ENCODE measurements at regions of chr11 and their contacts with region 1.

Region 1: GRCh38 chr11:43282607-43283440 is 29.0 kb upstream of the API5 start:
- DNase-seq: peak; percentile 55
- ATAC-seq: peak; percentile 42
- H3K4me3 Mint-ChIP-seq: no peak overlapping the region
- H3K27ac Mint-ChIP-seq: no peak overlapping the region
- H3K4me1 Mint-ChIP-seq: no peaks in the 10 kb centered on the region
- H3K27me3 Mint-ChIP-seq: peaks cover 6% of the 10 kb centered on the region

Region 2: DNA sequence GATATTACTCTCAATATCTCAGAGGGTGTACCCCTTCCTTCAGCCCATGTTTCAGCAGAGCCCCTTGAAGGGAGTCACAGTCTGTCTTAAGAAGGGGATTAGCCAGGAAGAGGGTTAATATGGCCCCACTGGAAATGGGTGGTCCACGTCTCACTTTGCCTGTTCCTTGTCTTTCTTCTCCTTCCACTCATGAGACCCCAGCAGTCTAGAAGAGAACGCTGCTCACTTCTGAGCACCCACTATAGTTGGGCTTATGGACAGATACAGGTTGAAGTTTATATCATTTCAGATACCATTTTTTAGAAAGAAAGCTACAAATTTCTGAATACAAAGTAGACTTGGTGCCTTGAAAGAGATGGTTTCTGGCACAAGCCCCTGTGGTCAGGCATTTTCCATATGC is 110.3 kb before region 1 on chr11:
- CTCF ChIA-PET with region 1: no interaction called
- DNase-seq: no peak
- ATAC-seq: no peak
- H3K4me3 Mint-ChIP-seq: no peak overlapping the region
- H3K27ac Mint-ChIP-seq: no peak overlapping the region
- H3K4me1 Mint-ChIP-seq: no peaks in the 10 kb centered on the region
- H3K27me3 Mint-ChIP-seq: no peaks in the 10 kb centered on the region

Region 3: DNA sequence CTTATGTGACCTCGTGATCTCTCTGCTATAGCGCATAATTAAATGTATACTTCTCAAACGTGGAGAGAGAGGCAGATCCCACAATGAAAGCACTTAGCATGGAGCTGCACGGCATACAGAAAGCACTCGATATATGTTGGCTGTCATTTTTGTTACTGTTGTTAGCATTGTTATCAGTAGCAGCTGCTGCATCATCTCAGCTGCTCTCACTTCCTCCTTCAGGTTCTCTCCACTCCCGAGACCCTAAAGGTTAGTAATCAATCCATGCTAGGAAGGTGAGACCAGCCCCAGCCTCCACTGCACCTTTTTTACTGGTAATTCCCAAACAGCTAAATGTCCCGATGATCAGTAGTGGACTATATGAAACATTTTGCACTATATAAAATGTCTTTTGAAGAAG is 15.6 kb after region 1 on chr11:
- CTCF ChIA-PET with region 1: interaction called, 13 read pairs
- DNase-seq: no peak
- ATAC-seq: no peak
- H3K4me3 Mint-ChIP-seq: no peak overlapping the region
- H3K27ac Mint-ChIP-seq: no peak overlapping the region
- H3K4me1 Mint-ChIP-seq: no peaks in the 10 kb centered on the region
- H3K27me3 Mint-ChIP-seq: no peaks in the 10 kb centered on the region

Region 4: DNA sequence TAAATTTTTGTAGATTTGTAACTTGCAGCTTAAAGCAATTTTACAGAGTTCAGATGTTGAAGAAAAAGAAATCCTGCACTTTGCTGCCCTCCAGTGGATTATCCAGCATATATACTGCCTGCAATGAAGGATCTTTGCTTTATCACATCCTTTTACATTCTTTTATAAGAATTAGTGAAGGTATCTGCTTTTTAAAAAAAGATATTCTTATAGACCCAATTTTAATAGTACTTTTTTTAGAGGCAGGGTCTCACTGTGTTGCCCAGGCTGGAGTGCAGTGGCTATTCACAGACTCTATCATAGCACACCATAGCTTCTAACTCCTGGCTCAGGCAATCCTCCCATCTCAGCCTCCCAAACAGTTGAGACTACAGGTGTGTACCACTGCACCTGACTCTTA is 136.6 kb after region 1 on chr11:
- CTCF ChIA-PET with region 1: interaction called, 11 read pairs
- DNase-seq: peak; percentile 70
- ATAC-seq: peak; percentile 80
- H3K4me3 Mint-ChIP-seq: no peak overlapping the region
- H3K27ac Mint-ChIP-seq: peak overlapping the region; percentile 60
- H3K4me1 Mint-ChIP-seq: peaks cover 6% of the 10 kb centered on the region
- H3K27me3 Mint-ChIP-seq: no peaks in the 10 kb centered on the region